MCF 10A (cell line): ENCODE measurements at regions of chr2 and their contacts with region 1.

Region 1: DNA sequence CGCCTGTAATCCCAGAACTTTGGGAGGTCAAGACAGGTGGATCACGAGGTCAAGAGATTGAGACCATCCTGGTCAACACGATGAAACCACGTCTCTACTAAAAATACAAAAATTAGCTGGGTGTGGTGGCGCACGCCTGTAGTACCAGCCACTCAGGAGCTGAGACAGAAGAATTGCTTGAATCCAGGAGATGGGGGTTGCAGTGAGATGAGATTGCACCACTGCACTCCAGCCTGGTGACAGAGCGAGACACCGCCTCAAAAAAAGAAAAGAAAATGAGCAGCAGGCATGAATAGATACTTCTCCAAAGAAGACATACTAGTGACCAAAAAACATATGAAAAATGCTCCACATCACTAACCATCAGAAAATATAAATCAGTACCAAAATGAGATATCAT is 138.6 kb downstream of the DNAH7 start:
- DNase-seq: no peak
- H3K4me3 Mint-ChIP-seq: no peak overlapping the region
- H3K27ac Mint-ChIP-seq: no peak overlapping the region
- H3K4me1 Mint-ChIP-seq: no peaks in the 10 kb centered on the region
- H3K27me3 Mint-ChIP-seq: no peaks in the 10 kb centered on the region
- CTCF ChIP-seq: no peak

Region 2: GRCh38 chr2:195094330-195094729 is 835.8 kb before region 1 on chr2:
- CTCF ChIA-PET with region 1: no interaction called
- POLR2A ChIA-PET with region 1: no interaction called
- intact Hi-C with region 1: no loop called
- DNase-seq: peak; percentile 55
- H3K4me3 Mint-ChIP-seq: no peak overlapping the region
- H3K27ac Mint-ChIP-seq: no peak overlapping the region
- H3K4me1 Mint-ChIP-seq: no peaks in the 10 kb centered on the region
- H3K27me3 Mint-ChIP-seq: no peaks in the 10 kb centered on the region
- CTCF ChIP-seq: no peak

Region 3: DNA sequence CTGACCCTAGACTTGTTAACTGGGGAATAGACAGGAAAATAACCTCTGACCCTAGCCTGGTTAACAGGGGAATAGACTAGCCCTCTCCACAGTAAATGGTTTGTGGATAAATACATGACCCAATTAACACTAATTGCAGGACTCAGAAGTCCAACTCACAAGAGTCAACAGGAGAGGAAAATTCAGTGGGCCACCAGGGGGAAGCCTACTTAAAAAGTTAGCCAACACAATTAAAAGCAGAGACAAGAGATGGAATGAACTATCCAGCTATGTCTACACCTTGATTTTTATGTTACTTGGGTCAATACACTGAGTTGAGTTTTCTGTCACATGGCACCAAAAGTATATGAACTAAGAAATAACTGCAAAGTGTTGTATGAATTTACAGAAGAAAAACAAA is 431.9 kb before region 1 on chr2:
- CTCF ChIA-PET with region 1: interaction called, 3 read pairs
- POLR2A ChIA-PET with region 1: no interaction called
- intact Hi-C with region 1: loop called (anchors 10 kb)
- DNase-seq: peak; percentile 53
- H3K4me3 Mint-ChIP-seq: no peak overlapping the region
- H3K27ac Mint-ChIP-seq: no peak overlapping the region
- H3K4me1 Mint-ChIP-seq: peaks cover 8% of the 10 kb centered on the region
- H3K27me3 Mint-ChIP-seq: no peaks in the 10 kb centered on the region
- CTCF ChIP-seq: peak; percentile 23

Region 4: GRCh38 chr2:196076778-196077568 is 146.9 kb after region 1 on chr2:
- CTCF ChIA-PET with region 1: no interaction called
- POLR2A ChIA-PET with region 1: no interaction called
- intact Hi-C with region 1: no loop called
- DNase-seq: no peak
- H3K4me3 Mint-ChIP-seq: no peak overlapping the region
- H3K27ac Mint-ChIP-seq: no peak overlapping the region
- H3K4me1 Mint-ChIP-seq: no peaks in the 10 kb centered on the region
- H3K27me3 Mint-ChIP-seq: no peaks in the 10 kb centered on the region
- CTCF ChIP-seq: no peak